ENCODE measurements at regions of chr7 and their contacts with region 1.

Region 1: DNA sequence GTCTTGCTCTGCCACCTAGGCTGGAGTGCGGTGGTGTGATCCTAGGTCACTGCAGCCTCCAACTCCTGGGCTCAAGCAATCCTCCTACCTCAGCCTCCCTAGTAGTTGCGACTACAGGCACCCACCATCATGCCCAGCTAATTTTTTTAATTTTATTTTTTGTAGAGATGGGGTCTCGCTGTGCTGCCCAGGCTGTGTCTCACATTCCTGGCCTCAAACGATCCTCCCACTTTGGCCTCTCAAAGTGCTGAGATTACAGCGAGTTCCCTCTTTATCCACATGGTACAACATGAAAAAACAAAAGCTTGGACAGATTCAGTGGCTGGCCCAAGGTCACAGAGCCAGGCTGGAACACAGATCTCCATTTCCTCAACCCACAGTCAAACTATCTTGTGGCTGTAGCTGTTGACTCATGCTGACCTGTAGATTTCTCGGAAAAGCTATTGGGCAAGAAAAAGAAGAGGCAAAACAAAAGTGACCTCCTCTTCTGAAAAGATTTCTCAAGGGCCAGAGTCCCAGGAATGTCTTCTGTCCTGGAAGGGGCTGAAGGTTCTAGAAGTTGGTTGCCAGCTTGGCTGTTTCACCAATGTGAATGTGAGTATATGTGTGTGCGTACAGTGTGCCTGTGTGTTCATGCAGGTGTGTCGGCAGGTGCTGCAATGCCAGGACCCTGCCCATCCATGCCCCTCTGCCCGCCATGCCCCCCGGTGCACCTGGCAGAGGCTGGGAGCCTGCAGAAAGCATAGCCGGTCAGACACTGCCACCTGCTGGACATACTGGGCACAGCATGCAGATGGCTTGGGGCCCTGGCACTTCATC is 28.4 kb downstream of the TMEM130 start:
- DNase-seq: peak; percentile 57
- ATAC-seq: peak; percentile 72 to 80

Region 2: GRCh38 chr7:98294796-98295382 is 546.5 kb before region 1 on chr7:
- intact Hi-C with region 1: loop called in 1 of 2 experiments (anchors 10 kb)
- DNase-seq: peak; percentile 45
- ATAC-seq: peak; percentile 65 to 89

Region 3: DNA sequence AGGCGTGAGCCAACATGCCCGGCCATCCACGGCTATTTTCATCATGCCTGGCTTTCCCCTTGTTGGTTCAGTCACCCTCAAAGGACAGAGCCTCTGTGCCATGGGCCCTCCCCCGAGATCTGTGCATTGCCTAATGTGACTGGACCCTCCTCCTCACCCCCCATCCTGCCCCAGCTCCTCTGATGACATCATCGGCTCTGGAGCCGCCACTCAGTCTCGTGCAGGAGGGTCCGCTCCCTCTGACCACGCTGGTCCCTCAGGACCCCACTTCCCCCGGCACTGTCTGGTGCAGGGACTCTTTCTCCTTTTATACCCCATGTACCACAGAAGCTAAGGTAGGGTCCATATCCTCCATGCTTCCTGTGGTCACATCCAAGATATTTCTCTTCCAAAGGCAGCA is 407.3 kb before region 1 on chr7:
- intact Hi-C with region 1: loop called (anchors 1 to 2 kb)
- DNase-seq: no peak
- ATAC-seq: no peak

Region 4: GRCh38 chr7:98753989-98754479 is 87.4 kb before region 1 on chr7:
- intact Hi-C with region 1: loop called (anchors 2 to 5 kb)
- DNase-seq: no peak
- ATAC-seq: no peak